ENCODE measurements at regions of chr2 and their contacts with region 1.

Region 1: DNA sequence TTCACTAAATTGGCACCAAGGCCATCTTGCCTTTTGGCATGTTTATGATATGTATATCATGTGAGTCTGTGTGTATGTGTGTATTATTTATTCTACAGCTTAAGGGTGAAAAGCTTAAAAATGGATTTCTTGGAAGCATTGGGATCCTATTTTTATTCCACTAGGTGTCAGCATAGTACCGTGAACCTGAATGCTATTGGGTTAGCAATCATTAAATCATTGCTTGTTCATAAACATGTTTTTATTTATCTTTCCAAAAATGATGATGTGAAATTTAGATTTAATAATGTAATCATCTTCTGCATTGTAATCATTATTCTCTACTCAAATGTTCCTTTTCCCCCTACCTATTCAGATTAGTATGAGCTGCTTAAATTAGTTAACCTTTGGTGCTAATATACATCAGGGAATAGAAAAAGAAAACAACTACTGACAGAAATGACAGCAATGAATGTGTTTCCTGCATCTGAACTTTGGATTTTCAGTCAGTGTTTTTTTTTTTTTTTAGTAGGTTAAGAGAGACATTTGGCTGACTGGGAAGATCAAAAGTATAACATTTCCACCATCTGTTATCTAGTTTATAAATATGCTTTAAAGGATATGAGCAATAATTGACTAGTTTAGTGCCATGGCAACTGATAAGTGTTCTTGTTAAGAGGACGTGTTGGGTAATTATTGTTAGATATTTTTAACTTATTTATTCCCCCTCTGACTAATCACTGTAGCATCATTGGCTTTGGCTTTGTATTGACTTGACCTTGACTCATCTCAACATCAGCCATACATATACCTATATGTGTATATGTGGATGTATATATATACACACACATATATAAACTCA is 14.1 kb upstream of the ZSWIM2 start:
- DNase-seq: no peak
- ATAC-seq: no peak

Region 2: DNA sequence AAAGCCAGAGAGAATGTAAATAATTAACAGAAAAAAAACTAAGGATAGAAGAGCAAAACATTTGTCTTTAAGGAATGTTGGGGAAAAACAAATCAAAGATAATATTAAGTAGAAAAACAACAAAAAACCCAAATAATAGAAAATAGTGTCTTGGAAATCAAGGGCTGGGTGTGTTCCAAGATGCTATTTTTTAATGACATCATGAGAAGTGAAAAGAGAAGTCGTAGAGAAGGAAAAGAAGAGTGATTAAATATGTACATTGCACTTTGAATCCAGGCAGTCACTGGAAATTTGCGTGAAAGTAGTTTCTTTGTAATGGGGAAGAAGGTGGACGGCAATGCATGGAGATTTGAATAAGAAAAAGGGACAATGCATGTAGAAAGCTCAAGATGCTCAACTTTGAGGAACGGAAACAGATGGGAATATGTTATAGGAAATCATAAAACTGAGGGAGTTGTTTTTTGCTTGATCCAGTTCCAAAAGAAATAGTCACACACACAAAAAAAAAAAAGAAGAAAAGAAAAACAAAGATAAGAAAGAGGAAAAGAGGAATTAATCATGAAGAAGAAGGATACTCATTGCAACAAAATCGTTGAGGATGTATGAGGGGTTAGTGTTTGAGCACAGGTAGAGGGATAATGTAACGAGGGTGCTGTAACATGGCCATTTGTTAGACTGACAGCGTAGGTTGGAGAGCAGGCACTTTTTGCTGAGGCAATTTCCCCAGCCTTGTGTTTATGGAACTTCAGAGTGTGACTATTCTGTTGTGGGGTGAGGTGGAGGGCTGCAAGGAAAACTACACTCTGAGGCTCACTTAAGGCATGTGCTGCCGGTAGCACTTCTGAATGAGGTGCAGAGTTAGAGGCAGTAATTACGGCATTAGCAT is 400.8 kb after region 1 on chr2:
- intact Hi-C with region 1: no loop called
- DNase-seq: no peak
- ATAC-seq: no peak

Region 3: DNA sequence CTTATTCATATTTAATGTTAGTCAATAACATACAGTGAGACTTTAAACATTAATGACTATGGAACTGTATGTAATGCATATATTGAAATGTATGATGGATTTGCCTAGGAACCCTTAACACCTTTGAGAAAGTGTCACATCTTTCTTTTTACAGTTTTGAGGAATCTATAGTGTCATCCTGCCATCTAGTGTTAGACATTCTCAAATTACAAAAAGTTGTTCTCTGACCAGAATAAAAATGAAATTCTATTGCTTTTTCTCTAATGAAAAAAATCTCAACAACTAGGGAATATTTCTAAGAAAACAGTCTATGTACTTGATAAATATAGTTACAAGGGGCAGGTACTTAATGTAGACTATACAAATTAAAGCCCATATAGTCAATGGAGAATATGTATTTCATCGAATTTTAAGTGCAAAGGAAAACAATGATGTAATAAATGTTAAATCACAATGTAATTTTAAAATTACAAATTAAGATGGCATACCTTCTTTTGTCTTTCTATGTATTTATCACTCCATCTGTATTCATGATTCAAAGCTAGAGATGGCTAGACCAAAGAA is 590.1 kb after region 1 on chr2:
- intact Hi-C with region 1: loop called in 1 of 2 experiments (anchors 5 kb)
- DNase-seq: no peak
- ATAC-seq: no peak

Region 4: GRCh38 chr2:187684174-187684573 is 821.1 kb after region 1 on chr2:
- intact Hi-C with region 1: no loop called
- DNase-seq: no peak
- ATAC-seq: no peak

Measured in left colon (tissue), 2 donors.